GM12878 (cell line): ENCODE measurements at regions of chr17 and their contacts with region 1.

Region 1: DNA sequence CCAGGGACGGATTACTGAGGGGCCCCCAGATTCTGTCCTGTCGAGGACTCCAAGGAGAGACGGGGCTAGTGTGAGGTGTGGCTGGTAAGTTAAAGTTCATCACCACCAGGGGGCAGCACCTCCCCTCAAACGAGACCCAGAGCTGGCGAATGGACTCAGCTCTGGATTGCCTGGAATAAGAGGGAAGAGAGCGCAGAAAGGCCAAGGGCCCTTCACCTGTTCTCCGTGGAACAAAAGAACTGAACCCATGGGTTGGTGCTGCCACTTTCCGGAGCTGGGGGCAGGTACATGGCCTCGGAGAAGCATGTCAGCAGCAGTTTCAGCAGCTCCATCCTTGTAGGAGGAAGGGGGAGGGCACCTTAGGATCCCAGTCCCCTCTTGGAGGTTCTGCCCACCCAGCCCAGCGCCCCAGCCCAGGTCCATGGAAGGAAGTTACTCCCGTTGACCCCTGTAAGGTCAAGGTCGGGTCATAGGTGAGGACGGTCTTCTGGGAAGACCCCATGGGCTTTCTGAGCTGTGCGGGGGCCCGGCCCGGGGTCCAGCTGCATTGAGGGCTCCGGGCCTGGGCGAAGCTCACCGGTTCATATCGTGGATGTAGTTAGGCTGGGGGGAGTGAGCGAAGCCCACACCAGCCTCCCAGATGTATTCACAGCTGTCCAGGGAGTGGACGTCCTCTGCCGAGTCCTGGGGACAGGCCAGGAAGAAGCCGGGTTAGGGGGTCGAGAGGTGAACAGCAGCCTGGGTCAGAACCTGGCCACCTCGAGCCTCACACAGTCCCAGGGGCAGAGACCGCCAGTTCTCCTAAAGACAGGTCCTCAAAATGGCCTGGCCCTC is 10.7 kb downstream of the HID1 start:
- DNase-seq: no peak
- ATAC-seq: peak; percentile 86
- H3K4me3 ChIP-seq: no peak overlapping the region
- H3K27ac ChIP-seq: no peak overlapping the region
- H3K4me1 ChIP-seq: no peaks in the 10 kb centered on the region; the same call in 1 of the 2 replicates
- H3K27me3 ChIP-seq: no peaks in the 10 kb centered on the region
- CTCF ChIP-seq: peak; percentile 62 to 83 (median 72)
- EP300 ChIP-seq: no peak
- POLR2A ChIP-seq: no peak
- RAD21 ChIP-seq: peak; percentile 75

Region 2: GRCh38 chr17:74873038-74873873 is 88.6 kb before region 1 on chr17:
- CTCF ChIA-PET with region 1: interaction called, 20 read pairs
- POLR2A ChIA-PET with region 1: interaction called, 6 read pairs
- RAD21 ChIA-PET with region 1: interaction called, 24 read pairs
- SMC1A ChIA-PET with region 1: interaction called, 10 read pairs
- in situ Hi-C with region 1: no loop called
- intact Hi-C with region 1: no loop called
- DNase-seq: peak; percentile 99
- ATAC-seq: peak; percentile 96
- H3K4me3 ChIP-seq: peak overlapping the region; percentile 82
- H3K27ac ChIP-seq: peak overlapping the region; percentile 96
- H3K4me1 ChIP-seq: peaks cover 14% of the 10 kb centered on the region
- H3K27me3 ChIP-seq: no peaks in the 10 kb centered on the region
- CTCF ChIP-seq: no peak
- EP300 ChIP-seq: peak in 1 of 2 experiments; percentile 36; a peak in 1 of 4 replicates
- POLR2A ChIP-seq: peak; percentile 86
- RAD21 ChIP-seq: no peak

Region 3: GRCh38 chr17:74951680-74952421 is 10.0 kb before region 1 on chr17:
- CTCF ChIA-PET with region 1: interaction called, 21 read pairs
- POLR2A ChIA-PET with region 1: no interaction called
- RAD21 ChIA-PET with region 1: interaction called, 4 read pairs
- SMC1A ChIA-PET with region 1: interaction called, 13 read pairs
- in situ Hi-C with region 1: no loop called
- intact Hi-C with region 1: no loop called
- DNase-seq: no peak
- ATAC-seq: no peak
- H3K4me3 ChIP-seq: no peak overlapping the region
- H3K27ac ChIP-seq: no peak overlapping the region
- H3K4me1 ChIP-seq: no peaks in the 10 kb centered on the region
- H3K27me3 ChIP-seq: no peaks in the 10 kb centered on the region
- CTCF ChIP-seq: no peak
- EP300 ChIP-seq: no peak
- POLR2A ChIP-seq: no peak
- RAD21 ChIP-seq: no peak

Region 4: DNA sequence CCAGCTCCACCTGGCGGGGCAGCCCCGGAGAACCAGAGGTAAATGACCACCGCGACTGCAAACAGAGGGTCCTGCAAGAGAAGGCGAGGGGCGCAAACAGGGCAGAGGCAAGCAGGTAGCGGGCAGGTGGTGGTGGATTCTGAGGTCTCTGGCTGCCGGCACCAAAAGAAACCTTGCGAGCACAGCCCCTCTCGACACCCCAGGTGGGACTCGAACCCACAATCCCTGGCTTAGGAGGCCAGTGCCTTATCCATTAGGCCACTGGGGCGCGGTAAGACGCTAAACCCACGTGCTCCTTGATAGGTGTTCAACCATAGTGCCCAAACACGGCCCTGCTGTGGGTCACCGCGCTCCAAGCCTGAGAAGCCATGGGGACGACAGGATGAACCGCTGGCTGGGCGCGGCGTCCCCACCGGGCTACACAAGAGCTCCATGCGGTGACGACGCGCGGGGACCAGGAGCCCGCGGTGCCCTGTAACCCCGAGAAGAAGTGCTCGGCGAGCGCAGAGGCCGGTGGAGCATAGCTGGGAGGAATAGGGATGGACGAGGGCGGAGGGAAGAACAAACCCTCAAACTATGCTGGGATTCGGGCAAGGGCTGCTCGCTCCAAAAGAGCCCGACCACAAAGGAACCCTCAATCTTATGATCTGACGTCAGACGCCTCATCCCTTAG is 72.5 kb after region 1 on chr17:
- CTCF ChIA-PET with region 1: interaction called, 37 read pairs
- POLR2A ChIA-PET with region 1: no interaction called
- RAD21 ChIA-PET with region 1: interaction called, 21 read pairs
- SMC1A ChIA-PET with region 1: interaction called, 15 read pairs
- in situ Hi-C with region 1: no loop called
- intact Hi-C with region 1: loop called (anchors 10 kb)
- DNase-seq: peak; percentile 88
- ATAC-seq: peak; percentile 86
- H3K4me3 ChIP-seq: peak overlapping the region; percentile 84
- H3K27ac ChIP-seq: peak overlapping the region; percentile 72
- H3K4me1 ChIP-seq: 0 out of 2 replicates have a peak, but pooled peaks cover 4% of the 10 kb centered on the region
- H3K27me3 ChIP-seq: no peaks in the 10 kb centered on the region
- CTCF ChIP-seq: no peak
- EP300 ChIP-seq: no peak; a peak in 1 of 4 replicates
- POLR2A ChIP-seq: no peak; the same call in none of the 2 replicates
- RAD21 ChIP-seq: no peak

Region 5: DNA sequence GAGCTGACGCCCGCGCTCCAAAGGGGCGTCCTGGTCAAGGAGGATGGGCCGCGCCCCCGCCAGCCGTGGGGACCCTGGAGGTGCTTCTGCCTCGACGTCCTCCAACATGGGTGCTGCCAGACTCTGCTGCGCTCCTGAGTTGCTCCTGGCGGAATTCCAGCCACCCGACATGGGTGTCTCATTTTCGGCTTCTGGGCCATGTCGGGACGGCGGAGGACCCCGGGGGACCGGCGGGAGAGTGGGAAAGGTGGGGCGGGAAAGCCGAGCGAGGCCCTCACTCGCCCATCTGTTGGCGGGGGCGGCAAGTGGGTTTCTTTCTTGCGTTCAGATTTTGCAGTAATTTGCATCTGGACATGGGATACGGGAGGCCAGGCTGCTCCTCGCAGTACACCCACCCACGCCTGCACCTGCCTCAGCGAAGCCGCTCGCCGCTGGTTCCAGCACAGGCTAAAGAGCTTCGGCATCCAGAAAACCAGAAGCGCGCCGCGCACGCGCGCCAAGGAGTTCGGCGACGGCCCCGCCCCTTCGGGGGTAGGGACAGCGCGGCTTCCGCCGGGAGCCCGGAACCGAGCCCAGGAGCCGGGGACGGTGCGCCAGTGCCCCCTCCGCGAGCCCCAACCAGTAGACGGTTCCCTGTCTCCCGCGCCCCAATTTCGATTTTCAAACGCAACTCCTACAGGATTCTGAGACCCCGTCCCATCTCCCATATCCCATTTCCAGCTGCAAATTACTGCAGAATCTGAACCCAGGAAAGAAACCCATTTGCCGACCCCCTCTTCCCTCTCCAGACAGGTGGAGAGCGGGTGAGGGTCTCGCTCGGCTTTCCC is 147.7 kb after region 1 on chr17 and contains the start of gene ARMC7:
- CTCF ChIA-PET with region 1: interaction called, 100 read pairs
- POLR2A ChIA-PET with region 1: interaction called, 3 read pairs
- RAD21 ChIA-PET with region 1: interaction called, 52 read pairs
- SMC1A ChIA-PET with region 1: interaction called, 29 read pairs
- in situ Hi-C with region 1: no loop called
- intact Hi-C with region 1: loop called (anchors 5 kb)
- DNase-seq: no peak
- ATAC-seq: peak; percentile 87
- H3K4me3 ChIP-seq: peak within 1 kb of the TSS; percentile 97
- H3K27ac ChIP-seq: peak within 1 kb of the TSS; percentile 37
- H3K4me1 ChIP-seq: peaks cover 22% of the 10 kb centered on the region
- H3K27me3 ChIP-seq: no peaks in the 10 kb centered on the region; a peak in 1 of 4 replicates
- CTCF ChIP-seq: no peak
- EP300 ChIP-seq: no peak
- POLR2A ChIP-seq: peak; percentile 88
- RAD21 ChIP-seq: no peak
- polyA plus RNA-seq, gene ARMC7: 1.5 to 4.3 TPM

Region 6: DNA sequence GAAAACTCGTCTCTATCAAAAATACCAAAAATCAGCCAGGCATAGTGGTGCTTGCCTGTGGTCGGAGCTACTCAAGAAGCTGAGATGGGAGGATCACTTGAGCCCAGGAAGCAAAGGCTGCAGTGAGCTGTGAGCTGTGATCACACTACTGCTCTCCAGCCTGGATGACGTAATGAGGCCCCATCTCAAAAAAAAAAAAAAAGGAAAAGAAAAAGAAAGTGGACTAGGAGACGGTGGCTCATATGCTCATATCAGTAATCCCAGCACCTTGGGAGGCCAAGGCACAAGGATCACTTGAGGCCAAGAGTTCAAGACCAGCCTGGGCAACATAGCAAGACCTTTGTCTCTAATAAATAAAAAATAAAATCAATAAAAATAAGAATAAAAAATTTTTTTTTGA is 229.7 kb after region 1 on chr17:
- CTCF ChIA-PET with region 1: interaction called, 20 read pairs
- POLR2A ChIA-PET with region 1: no interaction called
- RAD21 ChIA-PET with region 1: interaction called, 6 read pairs
- SMC1A ChIA-PET with region 1: no interaction called
- in situ Hi-C with region 1: no loop called
- intact Hi-C with region 1: no loop called
- DNase-seq: no peak
- ATAC-seq: no peak
- H3K4me3 ChIP-seq: no peak overlapping the region
- H3K27ac ChIP-seq: no peak overlapping the region
- H3K4me1 ChIP-seq: peaks cover 6% of the 10 kb centered on the region; the same call in 1 of the 2 replicates
- H3K27me3 ChIP-seq: no peaks in the 10 kb centered on the region
- CTCF ChIP-seq: no peak
- EP300 ChIP-seq: no peak
- POLR2A ChIP-seq: no peak
- RAD21 ChIP-seq: no peak

Region 7: GRCh38 chr17:75412455-75413317 is 450.8 kb after region 1 on chr17:
- CTCF ChIA-PET with region 1: interaction called, 14 read pairs
- POLR2A ChIA-PET with region 1: no interaction called
- RAD21 ChIA-PET with region 1: interaction called, 18 read pairs
- SMC1A ChIA-PET with region 1: interaction called, 9 read pairs
- in situ Hi-C with region 1: loop called (anchors 5 kb)
- intact Hi-C with region 1: loop called (anchors 10 kb)
- DNase-seq: no peak
- ATAC-seq: peak; percentile 93
- H3K4me3 ChIP-seq: no peak overlapping the region
- H3K27ac ChIP-seq: peak overlapping the region; percentile 20
- H3K4me1 ChIP-seq: peaks cover 15% of the 10 kb centered on the region
- H3K27me3 ChIP-seq: no peaks in the 10 kb centered on the region
- CTCF ChIP-seq: peak; percentile 73 to 89 (median 85)
- EP300 ChIP-seq: no peak
- POLR2A ChIP-seq: no peak
- RAD21 ChIP-seq: peak; percentile 94